GM12878 (cell line): ENCODE measurements at regions of chr10 and their contacts with region 1.

Region 1: DNA sequence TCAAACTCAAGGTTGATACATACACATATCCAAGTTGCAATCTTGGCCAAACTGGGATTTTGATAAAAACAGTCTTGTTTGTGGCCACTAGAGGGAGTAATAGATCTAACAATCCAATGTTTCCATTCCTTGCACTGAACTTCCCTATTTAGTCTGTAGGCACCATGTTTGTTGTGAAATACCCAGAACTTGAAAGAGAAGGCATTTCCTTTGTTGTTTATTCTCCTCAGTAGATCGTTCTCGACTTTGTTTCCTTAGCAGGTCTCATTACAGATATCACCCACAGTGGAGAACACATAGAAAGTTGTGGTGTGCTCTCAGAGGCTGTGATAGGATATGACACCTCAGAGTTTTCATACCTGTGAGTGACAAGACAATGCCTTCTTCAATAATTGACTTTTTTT is 70.3 kb upstream of the MXI1 start:
- DNase-seq: peak; percentile 48
- ATAC-seq: peak; percentile 83
- H3K4me3 ChIP-seq: no peak overlapping the region
- H3K27ac ChIP-seq: no peak overlapping the region
- H3K4me1 ChIP-seq: peaks cover 5% of the 10 kb centered on the region
- H3K27me3 ChIP-seq: no peaks in the 10 kb centered on the region; a peak in 1 of 4 replicates
- CTCF ChIP-seq: peak; percentile 57 to 79 (median 72)
- EP300 ChIP-seq: no peak
- POLR2A ChIP-seq: no peak
- RAD21 ChIP-seq: peak; percentile 89

Region 2: GRCh38 chr10:110109511-110109910 is 27.6 kb before region 1 on chr10:
- CTCF ChIA-PET with region 1: interaction called, 12 read pairs
- POLR2A ChIA-PET with region 1: interaction called, 3 read pairs
- RAD21 ChIA-PET with region 1: interaction called, 4 read pairs
- SMC1A ChIA-PET with region 1: interaction called, 5 read pairs
- in situ Hi-C with region 1: no loop called
- intact Hi-C with region 1: no loop called
- DNase-seq: no peak
- ATAC-seq: no peak
- H3K4me3 ChIP-seq: no peak overlapping the region
- H3K27ac ChIP-seq: no peak overlapping the region
- H3K4me1 ChIP-seq: no peaks in the 10 kb centered on the region
- H3K27me3 ChIP-seq: no peaks in the 10 kb centered on the region
- CTCF ChIP-seq: no peak
- EP300 ChIP-seq: no peak
- POLR2A ChIP-seq: no peak
- RAD21 ChIP-seq: no peak

Region 3: DNA sequence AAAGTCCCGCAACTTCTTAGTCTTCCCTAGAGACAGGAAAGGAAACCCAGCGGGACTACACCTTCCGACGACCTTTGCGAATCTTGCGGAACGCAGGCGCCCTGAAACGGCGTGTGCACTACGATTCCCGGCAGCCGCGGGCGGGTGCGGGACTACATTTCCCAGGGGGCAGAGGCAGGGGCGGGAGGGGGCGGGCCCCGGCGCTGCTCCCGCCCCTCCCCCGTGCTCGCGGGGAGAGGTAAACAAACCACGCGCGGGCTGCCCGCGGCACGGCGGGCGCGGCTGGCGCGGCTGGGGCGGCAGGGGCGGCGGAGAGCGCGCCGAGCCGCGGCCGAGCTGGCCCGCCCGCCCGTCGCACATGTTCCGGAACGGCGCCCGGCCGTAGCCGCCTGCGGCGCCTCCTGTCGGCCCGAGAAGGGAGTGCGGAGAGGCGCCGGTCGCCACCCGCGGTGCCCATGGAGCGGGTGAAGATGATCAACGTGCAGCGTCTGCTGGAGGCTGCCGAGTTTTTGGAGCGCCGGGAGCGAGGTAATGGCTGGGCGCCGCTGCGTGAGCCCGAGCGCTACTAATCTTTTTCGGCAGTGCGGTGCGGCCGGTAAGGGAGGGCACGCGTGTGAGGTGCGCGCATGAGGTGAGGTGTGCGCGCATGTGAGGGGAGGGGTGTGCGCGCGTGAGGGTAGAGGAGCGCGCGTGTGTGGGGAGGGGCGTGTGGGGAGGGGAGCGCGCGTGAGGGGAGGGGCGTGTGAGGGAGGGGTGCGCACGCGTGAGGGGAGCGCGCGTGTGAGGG is 88.8 kb after region 1 on chr10:
- CTCF ChIA-PET with region 1: interaction called, 32 read pairs
- POLR2A ChIA-PET with region 1: no interaction called
- RAD21 ChIA-PET with region 1: interaction called, 11 read pairs
- SMC1A ChIA-PET with region 1: interaction called, 12 read pairs
- in situ Hi-C with region 1: loop called (anchors 5 kb)
- intact Hi-C with region 1: loop called (anchors 2 kb)
- DNase-seq: no peak
- ATAC-seq: peak; percentile 92
- H3K4me3 ChIP-seq: peak overlapping the region; percentile 90
- H3K27ac ChIP-seq: no peak overlapping the region
- H3K4me1 ChIP-seq: peaks cover 3% of the 10 kb centered on the region; the same call in 1 of the 2 replicates
- H3K27me3 ChIP-seq: peaks cover 0 to 3% of the 10 kb centered on the region in 2 experiments; a peak in 2 of 4 replicates
- CTCF ChIP-seq: peak; percentile 58 to 74 (median 63)
- EP300 ChIP-seq: no peak
- POLR2A ChIP-seq: peak; percentile 63
- RAD21 ChIP-seq: peak; percentile 42

Region 4: DNA sequence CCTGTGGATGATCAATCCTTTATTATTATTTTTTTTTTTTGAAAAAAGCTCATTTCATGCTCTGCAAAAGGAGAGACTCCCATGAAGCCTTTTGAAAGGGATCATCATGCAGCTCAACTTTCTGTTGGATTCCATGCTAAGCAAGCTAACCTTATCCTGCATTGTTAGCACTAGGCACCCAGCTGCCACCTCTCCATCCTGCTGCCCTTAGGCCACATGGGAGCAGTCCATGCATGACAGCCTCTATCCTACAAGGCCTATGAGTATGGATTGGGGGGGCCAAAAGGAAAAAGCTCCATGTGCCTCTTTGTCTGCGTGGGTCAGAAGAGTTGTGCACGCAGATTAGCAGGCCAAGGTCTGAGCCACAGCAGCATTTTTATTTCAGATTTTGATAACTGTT is 148.4 kb after region 1 on chr10:
- CTCF ChIA-PET with region 1: interaction called, 105 read pairs
- POLR2A ChIA-PET with region 1: interaction called, 3 read pairs
- RAD21 ChIA-PET with region 1: interaction called, 42 read pairs
- SMC1A ChIA-PET with region 1: interaction called, 8 read pairs
- in situ Hi-C with region 1: loop called (anchors 5 kb)
- intact Hi-C with region 1: no loop called
- DNase-seq: no peak
- ATAC-seq: no peak; the same call in 2 of the 3 replicates
- H3K4me3 ChIP-seq: no peak overlapping the region
- H3K27ac ChIP-seq: no peak overlapping the region
- H3K4me1 ChIP-seq: no peaks in the 10 kb centered on the region
- H3K27me3 ChIP-seq: no peaks in the 10 kb centered on the region
- CTCF ChIP-seq: no peak
- EP300 ChIP-seq: no peak
- POLR2A ChIP-seq: no peak
- RAD21 ChIP-seq: no peak

Region 5: DNA sequence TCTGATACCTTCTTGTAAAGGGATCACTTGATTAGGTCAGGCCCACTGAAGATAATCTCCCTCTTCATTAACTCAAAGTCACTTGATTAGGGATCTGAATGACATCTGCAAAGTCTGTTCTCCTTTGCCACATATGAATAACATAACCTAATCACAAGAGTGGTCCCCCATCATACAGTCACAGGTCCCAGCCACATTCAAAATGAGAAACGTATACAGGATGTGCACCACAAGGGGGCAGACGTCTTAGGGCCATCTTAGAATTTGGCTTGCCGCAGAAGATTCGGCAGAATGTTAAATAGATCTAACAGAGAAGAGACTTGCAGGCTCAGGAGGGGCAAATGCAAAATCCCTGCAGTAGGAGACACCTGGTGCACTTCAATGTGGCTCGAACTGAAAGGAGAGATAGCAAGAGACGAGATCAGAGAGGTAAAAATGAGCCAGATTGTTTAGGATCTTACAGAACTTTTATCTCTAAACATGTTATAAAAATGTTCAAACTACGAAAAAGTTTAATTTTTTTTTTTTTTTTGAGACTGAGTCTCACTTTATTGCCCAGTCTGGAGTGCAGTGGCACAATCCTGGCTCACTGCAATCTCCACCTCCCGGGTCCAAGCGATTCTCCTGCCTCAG is 419.9 kb after region 1 on chr10:
- CTCF ChIA-PET with region 1: no interaction called
- POLR2A ChIA-PET with region 1: no interaction called
- RAD21 ChIA-PET with region 1: no interaction called
- SMC1A ChIA-PET with region 1: no interaction called
- in situ Hi-C with region 1: loop called (anchors 10 kb)
- intact Hi-C with region 1: no loop called
- DNase-seq: no peak
- ATAC-seq: peak; percentile 99
- H3K4me3 ChIP-seq: no peak overlapping the region
- H3K27ac ChIP-seq: no peak overlapping the region
- H3K4me1 ChIP-seq: no peaks in the 10 kb centered on the region
- H3K27me3 ChIP-seq: no peaks in the 10 kb centered on the region
- CTCF ChIP-seq: peak; percentile 77 to 87 (median 83)
- EP300 ChIP-seq: no peak
- POLR2A ChIP-seq: no peak
- RAD21 ChIP-seq: peak; percentile 58

Region 6: DNA sequence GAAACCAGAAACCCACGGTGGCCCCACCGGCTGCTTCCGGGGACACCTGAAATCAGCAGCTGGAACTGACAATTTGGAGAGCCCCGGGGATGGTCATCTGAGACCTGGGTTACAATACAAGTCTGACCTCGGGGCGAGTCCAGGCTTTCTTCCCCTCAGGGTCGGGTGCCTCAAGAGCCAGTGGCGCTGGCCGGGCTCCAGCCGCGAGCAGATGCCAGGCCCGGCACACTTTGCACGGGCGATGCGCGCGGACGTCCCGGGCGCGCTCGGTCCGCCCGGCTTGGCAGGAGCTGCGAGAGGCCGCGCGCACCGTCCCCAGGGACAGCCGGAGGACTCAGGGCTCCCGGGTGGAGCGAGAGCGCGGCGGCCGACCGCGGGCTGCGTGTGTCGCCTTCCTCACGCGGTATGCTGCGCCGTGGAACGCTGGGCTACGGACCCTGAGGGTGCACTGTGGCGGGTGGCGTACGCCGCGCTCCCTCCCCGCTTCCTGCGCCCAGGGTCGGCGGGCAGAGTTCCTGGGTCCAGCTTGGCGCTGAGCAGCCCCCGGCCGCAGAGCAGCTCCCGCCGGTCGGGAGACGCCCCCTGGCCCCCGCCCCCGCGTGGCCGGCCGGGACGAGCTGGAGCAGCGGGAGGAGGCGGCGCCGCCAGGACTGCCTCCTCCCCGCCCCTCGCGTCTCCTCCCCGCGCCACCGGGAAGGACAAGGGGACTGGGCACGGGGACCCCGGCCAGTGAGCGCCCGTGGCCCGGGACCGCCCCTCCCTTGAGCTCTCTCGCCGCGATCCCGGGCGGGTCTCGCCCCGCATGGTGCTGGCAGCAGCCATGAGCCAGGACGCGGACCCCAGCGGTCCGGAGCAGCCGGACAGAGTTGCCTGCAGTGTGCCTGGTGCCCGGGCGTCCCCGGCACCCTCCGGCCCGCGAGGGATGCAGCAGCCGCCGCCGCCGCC is 506.8 kb after region 1 on chr10 and contains the start of gene RBM20:
- CTCF ChIA-PET with region 1: no interaction called
- POLR2A ChIA-PET with region 1: no interaction called
- RAD21 ChIA-PET with region 1: no interaction called
- SMC1A ChIA-PET with region 1: no interaction called
- in situ Hi-C with region 1: no loop called
- intact Hi-C with region 1: no loop called
- DNase-seq: no peak
- ATAC-seq: peak; percentile 70
- H3K4me3 ChIP-seq: peak within 1 kb of the TSS; percentile 58
- H3K27ac ChIP-seq: no peak within 1 kb of the TSS
- H3K4me1 ChIP-seq: peaks cover 4% of the 10 kb centered on the region; the same call in 1 of the 2 replicates
- H3K27me3 ChIP-seq: peaks cover 10 to 22% of the 10 kb centered on the region in 2 experiments
- CTCF ChIP-seq: no peak
- EP300 ChIP-seq: no peak
- POLR2A ChIP-seq: no peak
- RAD21 ChIP-seq: no peak
- polyA plus RNA-seq, gene RBM20: 0.04 to 0.05 TPM